Aorta (tissue), 5 donors: ENCODE measurements at regions of chr18 and their contacts with region 1.

Region 1: DNA sequence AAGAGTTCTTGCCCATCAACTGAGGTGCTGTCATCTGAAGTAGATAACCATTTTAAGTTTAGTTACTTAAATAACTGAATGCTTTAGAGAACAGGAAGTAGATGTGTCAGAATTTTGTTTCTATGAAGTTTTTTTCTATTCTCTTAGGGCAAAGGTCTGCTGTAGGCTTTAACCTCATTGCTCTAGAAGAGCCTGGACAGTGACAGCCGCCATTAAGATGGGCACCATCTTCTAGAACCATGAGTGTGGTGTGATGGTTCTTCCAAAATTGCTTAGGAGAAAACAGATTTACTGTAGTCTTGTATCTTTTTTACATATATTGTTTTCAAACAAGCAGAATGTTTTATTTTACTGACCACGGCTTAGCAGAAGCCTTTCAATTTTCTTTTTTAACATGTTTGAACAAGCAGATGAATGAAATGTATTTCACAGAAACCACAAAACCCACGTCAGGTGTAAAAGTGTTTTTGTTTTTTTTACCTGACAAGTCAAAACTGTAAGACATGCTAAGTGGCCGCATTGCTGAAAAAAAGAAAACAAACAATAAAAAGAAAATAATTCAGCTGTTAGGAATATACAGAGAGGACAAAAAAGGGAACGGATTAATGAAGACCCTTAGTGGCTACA is 77.9 kb downstream of the PRELID3A start:
- DNase-seq: no peak
- ATAC-seq: no peak
- H3K4me3 ChIP-seq: no peak overlapping the region
- H3K27ac ChIP-seq: no peak overlapping the region
- H3K4me1 ChIP-seq: no peaks in the 10 kb centered on the region
- H3K27me3 ChIP-seq: no peaks in the 10 kb centered on the region

Region 2: DNA sequence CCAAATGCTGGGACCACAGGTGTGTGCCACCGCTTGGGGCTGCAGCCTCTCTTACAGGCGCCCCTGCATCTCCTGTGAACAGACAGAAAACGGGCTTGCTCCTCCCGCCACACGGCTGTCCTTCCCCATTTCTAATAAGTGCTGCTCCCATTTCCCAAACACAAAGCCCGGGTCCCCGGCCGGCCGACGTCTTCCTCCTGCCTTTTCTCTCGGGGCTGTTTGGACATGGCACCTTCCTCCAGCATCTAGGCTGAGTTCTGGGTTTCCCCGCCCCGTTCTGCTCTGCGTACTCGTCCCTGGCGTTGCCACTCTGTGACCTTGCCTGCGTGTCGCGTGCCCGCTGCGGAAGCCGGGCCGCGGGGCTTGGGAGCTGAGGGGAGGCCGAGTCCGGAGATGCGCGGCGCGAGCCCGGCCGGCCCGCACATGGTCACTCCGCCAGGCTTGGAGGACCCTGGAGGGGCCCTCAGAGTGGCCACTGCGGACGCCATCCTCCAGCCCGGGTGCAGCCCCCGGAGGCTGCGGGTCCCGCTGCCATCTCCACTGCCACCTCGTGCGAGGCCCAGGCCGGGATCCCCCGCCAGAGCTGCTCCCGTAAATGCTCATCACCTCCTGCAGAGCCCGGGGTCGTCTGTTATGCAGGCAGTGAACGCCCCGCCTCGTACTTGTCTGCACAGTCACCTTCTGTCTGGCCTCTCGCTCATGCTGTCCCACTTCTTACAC is 51.6 kb before region 1 on chr18:
- intact Hi-C with region 1: loop called in 1 of 2 experiments (anchors 10 kb)
- DNase-seq: no peak
- ATAC-seq: no peak
- H3K4me3 ChIP-seq: no peak overlapping the region
- H3K27ac ChIP-seq: no peak overlapping the region
- H3K4me1 ChIP-seq: no peaks in the 10 kb centered on the region
- H3K27me3 ChIP-seq: no peaks in the 10 kb centered on the region